ENCODE measurements at regions of chr16 and their contacts with region 1.

Region 1: DNA sequence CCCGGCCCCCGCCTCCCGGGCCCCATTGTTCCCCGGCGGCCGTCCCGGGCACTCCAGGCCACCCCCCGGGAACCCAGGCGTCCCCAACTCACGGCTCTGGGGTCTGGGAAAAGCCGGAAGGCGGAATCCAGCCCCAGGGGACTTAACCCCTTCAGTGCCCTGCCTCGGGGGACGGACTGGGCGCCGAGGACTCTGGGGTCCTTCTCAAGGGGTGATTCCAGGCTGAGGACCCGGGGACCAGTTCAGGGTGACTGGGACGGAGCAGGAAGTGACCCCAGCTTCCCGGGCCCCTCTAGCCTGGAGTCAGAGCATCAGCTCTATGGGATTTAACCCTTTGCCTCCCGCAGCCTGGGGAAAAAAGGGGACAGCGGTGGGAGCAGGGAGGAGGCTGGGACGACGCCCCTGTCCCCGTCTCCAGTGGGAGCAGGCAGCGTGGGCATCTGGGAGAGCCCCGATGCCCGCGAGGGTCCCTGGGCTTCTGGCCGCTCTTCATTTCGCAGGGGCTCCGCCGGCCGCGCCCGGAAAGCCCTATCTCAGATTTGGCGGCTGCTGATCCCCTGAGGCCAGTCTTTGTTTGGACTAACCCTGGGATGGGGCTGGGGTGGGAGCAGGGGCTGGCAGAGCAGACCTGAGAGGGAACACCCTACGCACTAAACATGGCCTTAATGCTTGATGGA is at the start of gene ZNF629:
- DNase-seq: peak; percentile 74 to 82 (median 78)
- H3K4me3 ChIP-seq: peak within 1 kb of the TSS; percentile 91
- H3K27ac ChIP-seq: peak within 1 kb of the TSS; percentile 65 to 87
- H3K4me1 ChIP-seq: peaks cover 7% of the 10 kb centered on the region
- H3K27me3 ChIP-seq: no peaks in the 10 kb centered on the region
- CTCF ChIP-seq: no peak
- EP300 ChIP-seq: no peak
- POLR2A ChIP-seq: no peak
- total RNA-seq, gene ZNF629: 9.4 to 26.3 (median 21.9) TPM

Region 2: DNA sequence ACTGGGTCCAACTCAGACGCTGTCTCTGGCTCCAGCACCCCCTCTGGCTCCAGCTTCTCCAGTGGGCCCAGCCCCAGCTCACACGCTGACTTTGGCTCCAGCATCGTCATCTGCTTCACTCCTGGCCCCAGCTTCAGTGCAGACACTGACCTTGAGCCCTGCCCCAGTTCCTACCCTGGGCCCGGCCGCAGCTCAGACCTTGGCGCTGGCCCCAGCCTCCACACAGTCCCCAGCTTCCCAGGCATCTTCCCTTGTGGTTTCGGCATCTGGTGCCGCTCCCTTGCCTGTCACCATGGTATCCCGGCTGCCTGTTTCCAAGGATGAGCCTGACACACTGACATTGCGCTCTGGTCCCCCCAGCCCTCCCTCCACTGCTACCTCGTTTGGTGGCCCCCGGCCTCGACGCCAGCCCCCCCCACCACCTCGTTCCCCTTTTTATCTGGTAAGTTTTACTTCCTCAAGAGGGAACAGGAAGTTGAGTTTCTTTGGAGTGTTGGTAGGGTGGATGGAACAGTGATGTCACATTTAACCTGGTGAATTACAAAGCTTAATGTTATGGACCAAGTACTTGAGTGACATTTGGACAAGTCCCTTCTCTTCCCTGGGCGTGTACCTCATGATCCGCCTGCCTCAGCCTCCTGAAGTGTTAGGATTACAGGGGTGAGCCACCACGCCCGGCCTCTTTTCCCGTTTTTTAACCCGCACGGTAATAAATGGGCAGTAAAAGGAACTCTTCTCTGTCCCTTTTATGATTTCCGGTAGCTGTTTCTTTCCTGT is 62.2 kb before region 1 on chr16:
- intact Hi-C with region 1: loop called in 1 of 4 experiments (anchors 10 kb)
- DNase-seq: peak; percentile 48 to 83 (median 71)
- H3K4me3 ChIP-seq: no peak overlapping the region
- H3K27ac ChIP-seq: no peak overlapping the region
- H3K4me1 ChIP-seq: no peaks in the 10 kb centered on the region
- H3K27me3 ChIP-seq: no peaks in the 10 kb centered on the region
- CTCF ChIP-seq: no peak
- EP300 ChIP-seq: no peak
- POLR2A ChIP-seq: no peak

Region 3: GRCh38 chr16:30762811-30763725 is 24.0 kb before region 1 on chr16:
- intact Hi-C with region 1: loop called in 1 of 4 experiments (anchors 1 kb)
- DNase-seq: peak in 2 of 5 donors; percentile 23 to 35
- H3K4me3 ChIP-seq: peak overlapping the region; percentile 63
- H3K27ac ChIP-seq: peak overlapping the region; percentile 70 to 90
- H3K4me1 ChIP-seq: peaks cover 6% of the 10 kb centered on the region
- H3K27me3 ChIP-seq: no peaks in the 10 kb centered on the region
- CTCF ChIP-seq: no peak
- EP300 ChIP-seq: no peak
- POLR2A ChIP-seq: no peak

Region 4: DNA sequence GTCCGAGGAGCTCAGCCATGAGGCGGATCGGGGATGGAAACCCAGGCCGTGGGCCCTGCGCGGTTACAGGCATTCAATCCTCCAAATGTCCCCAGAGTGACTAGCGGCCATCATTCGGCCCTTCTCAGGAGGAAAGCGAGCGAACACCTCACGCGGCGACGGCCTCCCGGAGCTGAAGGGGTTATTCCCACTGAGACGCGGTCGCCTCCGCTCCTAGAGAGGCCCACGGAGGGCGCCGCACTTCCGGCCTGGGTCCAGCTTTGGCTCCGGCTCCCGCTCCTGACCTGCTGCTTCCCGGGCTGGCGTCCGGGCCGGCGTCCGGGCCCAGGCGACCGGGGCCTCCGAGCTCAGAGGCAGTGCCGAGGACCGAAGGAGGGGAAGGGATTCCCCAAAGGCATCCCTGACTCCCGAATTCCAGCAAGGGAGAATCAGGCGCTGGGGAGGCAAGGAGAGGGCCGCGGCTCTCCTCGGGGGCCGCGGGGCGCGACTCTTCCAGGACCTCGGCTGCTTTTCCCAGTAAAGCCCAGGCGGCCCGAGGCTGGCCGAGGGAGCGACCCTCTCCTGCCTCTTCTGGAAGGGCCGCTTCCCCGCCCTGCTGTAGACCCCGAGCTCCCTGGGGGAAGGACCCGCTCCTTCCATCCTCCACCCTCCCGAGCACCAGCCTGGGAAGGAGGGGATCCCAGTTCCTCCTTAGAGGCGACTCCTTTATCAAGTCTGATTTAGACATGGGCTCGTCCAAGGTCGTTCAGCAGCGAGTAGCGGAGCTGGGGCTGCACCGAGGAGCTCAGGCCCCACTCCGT is 18.5 kb after region 1 on chr16:
- intact Hi-C with region 1: loop called in 1 of 4 experiments (anchors 2 kb)
- DNase-seq: peak; percentile 90 to 93 (median 91)
- H3K4me3 ChIP-seq: peak overlapping the region; percentile 75
- H3K27ac ChIP-seq: peak overlapping the region; percentile 13 to 81
- H3K4me1 ChIP-seq: peaks cover 7% of the 10 kb centered on the region
- H3K27me3 ChIP-seq: no peaks in the 10 kb centered on the region
- CTCF ChIP-seq: peak in 1 of 3 donors; percentile 33
- EP300 ChIP-seq: no peak
- POLR2A ChIP-seq: peak; percentile 96

Measured in ovary (tissue), 10 donors.